ENCODE measurements at regions of chr3 and their contacts with region 1.

Region 1: GRCh38 chr3:45760878-45761711 is 35.2 kb downstream of the SLC6A20 start:
- DNase-seq: peak; percentile 88
- CTCF ChIP-seq: peak; percentile 80

Region 2: GRCh38 chr3:45741742-45742141 is 19.4 kb before region 1 on chr3:
- CTCF ChIA-PET with region 1: interaction called, 19 read pairs
- POLR2A ChIA-PET with region 1: no interaction called
- DNase-seq: no peak
- CTCF ChIP-seq: no peak

Region 3: GRCh38 chr3:45776611-45777010 is 15.5 kb after region 1 on chr3:
- CTCF ChIA-PET with region 1: interaction called, 73 read pairs
- POLR2A ChIA-PET with region 1: no interaction called
- DNase-seq: no peak
- CTCF ChIP-seq: no peak

Region 4: GRCh38 chr3:45832691-45833090 is 71.6 kb after region 1 on chr3:
- CTCF ChIA-PET with region 1: interaction called, 10 read pairs
- POLR2A ChIA-PET with region 1: no interaction called
- DNase-seq: no peak
- CTCF ChIP-seq: no peak

Region 5: GRCh38 chr3:45938864-45939263 is 177.8 kb after region 1 on chr3:
- CTCF ChIA-PET with region 1: interaction called, 155 read pairs
- POLR2A ChIA-PET with region 1: no interaction called
- DNase-seq: peak; percentile 79
- CTCF ChIP-seq: peak; percentile 82

Measured in GM10248 (cell line).